ENCODE measurements at regions of chr1 and their contacts with region 1.

Region 1: GRCh38 chr1:58515794-58516401 is 30.6 kb downstream of the OMA1 start:
- DNase-seq: peak in 15 of 35 experiments; percentile 1 to 82 (median 16)
- ATAC-seq: peak in 2 of 4 experiments; percentile 50 to 51
- H3K4me3 ChIP-seq: no peak overlapping the region
- H3K4me3 Mint-ChIP-seq: no peak overlapping the region
- H3K27ac ChIP-seq: no peak overlapping the region
- H3K27ac Mint-ChIP-seq: peak overlapping the region; percentile 12 to 66
- H3K4me1 ChIP-seq: no peaks in the 10 kb centered on the region
- H3K4me1 Mint-ChIP-seq: peaks cover 7 to 9% (median 9%) of the 10 kb centered on the region in 3 donors
- H3K27me3 ChIP-seq: no peaks in the 10 kb centered on the region
- H3K27me3 Mint-ChIP-seq: no peaks in the 10 kb centered on the region

Region 2: DNA sequence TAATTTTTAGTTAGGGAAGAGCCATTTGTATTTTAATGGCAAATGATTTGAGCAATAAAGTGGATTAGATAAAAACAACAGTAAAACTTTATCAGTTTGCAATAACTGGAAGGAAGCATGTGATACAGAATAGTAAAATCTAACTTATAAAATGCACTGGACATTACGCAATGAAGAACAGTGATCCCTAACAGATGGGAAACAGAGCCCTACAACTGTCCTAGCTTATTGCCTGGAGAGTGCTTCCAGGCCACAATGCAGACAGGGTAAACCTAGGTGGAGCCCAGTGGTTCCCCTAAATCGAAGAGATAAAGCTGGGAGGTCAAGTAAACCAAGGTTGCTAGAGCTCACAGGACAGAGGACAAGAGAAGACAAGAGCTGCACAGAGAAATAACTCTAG is 23.7 kb after region 1 on chr1:
- CTCF ChIA-PET with region 1: interaction called, 6 to 18 read pairs
- POLR2A ChIA-PET with region 1: interaction called in 1 of 2 experiments, 3 read pairs
- DNase-seq: no peak
- ATAC-seq: no peak
- H3K4me3 ChIP-seq: no peak overlapping the region
- H3K4me3 Mint-ChIP-seq: no peak overlapping the region
- H3K27ac ChIP-seq: no peak overlapping the region
- H3K27ac Mint-ChIP-seq: no peak overlapping the region
- H3K4me1 ChIP-seq: peaks cover 0 to 2% of the 10 kb centered on the region in 2 experiments
- H3K4me1 Mint-ChIP-seq: peaks cover 10 to 29% (median 18%) of the 10 kb centered on the region in 3 donors
- H3K27me3 ChIP-seq: no peaks in the 10 kb centered on the region
- H3K27me3 Mint-ChIP-seq: no peaks in the 10 kb centered on the region

Region 3: DNA sequence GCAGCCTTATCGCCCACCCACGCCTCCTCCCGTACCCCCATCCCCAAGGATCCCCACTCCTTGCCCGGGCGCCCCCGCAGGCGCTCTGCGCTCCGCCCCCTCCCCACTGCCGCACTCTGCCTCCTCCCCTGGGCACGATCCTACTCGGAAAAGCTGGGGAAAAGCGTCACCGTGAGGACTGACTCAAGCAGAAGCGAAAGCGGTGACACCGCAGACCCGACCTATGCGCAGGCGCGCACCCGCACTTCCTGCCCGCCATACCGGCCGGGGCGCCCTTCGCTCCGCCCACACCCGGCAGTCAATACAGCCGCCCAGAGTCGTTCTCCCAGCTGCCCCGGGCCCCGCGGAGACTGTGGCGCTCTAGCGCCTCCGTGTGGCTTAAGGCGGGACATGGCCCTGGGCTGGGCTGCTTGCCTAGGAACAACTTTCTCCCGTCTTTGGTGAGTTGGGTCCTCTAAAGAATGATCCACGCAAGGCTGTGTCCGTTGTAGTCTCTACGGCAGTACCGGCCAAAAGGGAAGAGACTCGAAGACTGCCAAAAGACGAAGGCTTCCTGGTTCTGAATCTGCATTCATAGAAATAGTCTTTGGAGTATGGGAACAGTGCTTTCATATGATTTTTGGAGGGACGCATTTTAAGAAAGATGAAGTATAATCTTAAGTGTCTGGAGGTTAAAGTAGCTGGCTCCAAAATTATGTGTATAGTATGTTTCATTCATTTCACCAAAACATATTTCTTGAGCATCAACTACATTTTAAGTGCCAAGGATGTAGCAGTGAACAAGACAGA is 30.8 kb after region 1 on chr1 and contains the start of gene OMA1:
- CTCF ChIA-PET with region 1: interaction called, 23 to 33 read pairs
- POLR2A ChIA-PET with region 1: interaction called in 1 of 2 experiments, 3 read pairs
- DNase-seq: peak; percentile 94 to 99 (median 97)
- ATAC-seq: peak; percentile 93 to 94 (median 93)
- H3K4me3 ChIP-seq: peak within 1 kb of the TSS; percentile 77 to 78
- H3K4me3 Mint-ChIP-seq: peak within 1 kb of the TSS; percentile 92
- H3K27ac ChIP-seq: peak within 1 kb of the TSS; percentile 98
- H3K27ac Mint-ChIP-seq: peak within 1 kb of the TSS; percentile 96 to 98
- H3K4me1 ChIP-seq: peaks cover 3 to 17% of the 10 kb centered on the region in 2 experiments
- H3K4me1 Mint-ChIP-seq: peaks cover 24 to 32% (median 27%) of the 10 kb centered on the region in 3 donors
- H3K27me3 ChIP-seq: no peaks in the 10 kb centered on the region
- H3K27me3 Mint-ChIP-seq: peaks cover 0 to 2% of the 10 kb centered on the region in 2 donors
- total RNA-seq, gene OMA1: 31.3 to 50.4 (median 43.9) TPM

Region 4: DNA sequence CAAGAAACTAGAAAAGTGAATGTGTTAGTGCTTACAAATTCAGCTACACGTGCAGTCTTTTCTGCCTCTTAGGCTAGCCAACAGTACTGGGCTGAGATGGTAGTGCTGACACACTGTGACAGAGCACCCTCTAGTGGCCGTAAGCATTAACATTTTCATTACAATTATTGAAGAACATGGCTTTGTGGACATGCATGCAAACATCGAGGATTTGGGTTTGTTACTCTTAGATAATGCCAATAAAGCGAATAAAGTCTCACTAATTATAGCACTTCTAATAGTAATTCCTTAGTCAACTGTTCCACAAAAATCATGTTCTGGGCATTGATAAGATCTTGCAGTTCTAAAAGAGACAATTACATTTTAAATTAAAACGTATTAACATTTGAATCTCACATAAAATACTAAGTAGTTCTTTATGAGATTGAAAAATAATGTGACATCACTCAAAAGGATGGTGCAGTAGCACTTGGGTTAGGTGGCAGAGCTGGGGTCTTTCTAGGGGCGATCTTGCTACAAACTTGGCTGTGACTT is 136.8 kb after region 1 on chr1:
- CTCF ChIA-PET with region 1: interaction called, 29 to 48 read pairs
- POLR2A ChIA-PET with region 1: no interaction called
- DNase-seq: peak in 31 of 35 experiments; percentile 11 to 85 (median 38)
- ATAC-seq: peak; percentile 71 to 86 (median 82)
- H3K4me3 ChIP-seq: no peak overlapping the region
- H3K4me3 Mint-ChIP-seq: no peak overlapping the region
- H3K27ac ChIP-seq: no peak overlapping the region
- H3K27ac Mint-ChIP-seq: no peak overlapping the region
- H3K4me1 ChIP-seq: peaks cover 0 to 10% of the 10 kb centered on the region in 2 experiments
- H3K4me1 Mint-ChIP-seq: peaks cover 19 to 27% (median 25%) of the 10 kb centered on the region in 3 donors
- H3K27me3 ChIP-seq: no peaks in the 10 kb centered on the region
- H3K27me3 Mint-ChIP-seq: no peaks in the 10 kb centered on the region

Region 5: GRCh38 chr1:59759156-59759925 is 1243.4 kb after region 1 on chr1:
- CTCF ChIA-PET with region 1: interaction called, 7 to 12 read pairs
- POLR2A ChIA-PET with region 1: no interaction called
- DNase-seq: peak; percentile 40 to 79 (median 60)
- ATAC-seq: peak; percentile 76 to 88 (median 79)
- H3K4me3 ChIP-seq: no peak overlapping the region
- H3K4me3 Mint-ChIP-seq: no peak overlapping the region
- H3K27ac ChIP-seq: no peak overlapping the region
- H3K27ac Mint-ChIP-seq: no peak overlapping the region
- H3K4me1 ChIP-seq: peaks cover 0 to 6% of the 10 kb centered on the region in 2 experiments
- H3K4me1 Mint-ChIP-seq: peaks cover 4 to 6% (median 4%) of the 10 kb centered on the region in 3 donors
- H3K27me3 ChIP-seq: peaks cover 0 to 4% of the 10 kb centered on the region in 2 experiments
- H3K27me3 Mint-ChIP-seq: no peaks in the 10 kb centered on the region

Measured in T-cell (primary cell).